ENCODE measurements at regions of chr1 and their contacts with region 1.

Region 1: DNA sequence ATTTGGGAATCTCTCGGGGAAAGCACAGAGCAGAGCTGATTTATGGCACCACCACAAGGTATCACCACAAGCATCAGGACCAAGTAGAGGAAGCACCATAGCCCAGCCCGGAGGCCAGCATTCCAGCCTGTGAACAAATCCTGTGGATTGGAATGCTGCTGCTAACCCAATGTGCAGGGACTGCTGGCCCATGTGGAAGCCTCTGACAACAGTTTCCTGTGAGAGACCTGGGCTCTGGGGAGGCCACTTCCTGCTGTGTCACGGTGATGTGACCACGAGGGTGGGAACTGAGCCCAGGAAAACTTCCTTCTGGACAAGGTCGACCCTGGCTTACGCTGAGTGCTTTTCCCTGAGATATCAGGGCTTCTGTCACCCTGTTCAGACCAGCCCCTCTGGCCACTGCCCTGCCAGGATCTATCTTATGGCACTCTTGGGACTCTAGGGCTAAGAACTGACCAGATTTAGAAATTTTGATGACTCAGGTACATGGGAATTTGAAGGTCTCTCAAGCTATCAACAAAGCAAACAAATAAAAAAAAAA is 88.3 kb upstream of the NGF start:
- DNase-seq: peak; percentile 84 to 97
- H3K4me3 ChIP-seq: no peak overlapping the region
- H3K27ac ChIP-seq: peak overlapping the region; percentile 90
- H3K4me1 ChIP-seq: peaks cover 64% of the 10 kb centered on the region
- H3K27me3 ChIP-seq: no peaks in the 10 kb centered on the region
- CTCF ChIP-seq: no peak

Region 2: GRCh38 chr1:115062542-115063011 is 363.7 kb before region 1 on chr1:
- CTCF ChIA-PET with region 1: no interaction called
- POLR2A ChIA-PET with region 1: no interaction called
- intact Hi-C with region 1: loop called (anchors 10 kb)
- DNase-seq: peak; percentile 98 to 99
- H3K4me3 ChIP-seq: peak overlapping the region; percentile 49
- H3K27ac ChIP-seq: peak overlapping the region; percentile 96
- H3K4me1 ChIP-seq: peaks cover 54% of the 10 kb centered on the region
- H3K27me3 ChIP-seq: no peaks in the 10 kb centered on the region
- CTCF ChIP-seq: 0 out of 2 replicates have a peak, but pooled peaks have one; percentile 26

Region 3: DNA sequence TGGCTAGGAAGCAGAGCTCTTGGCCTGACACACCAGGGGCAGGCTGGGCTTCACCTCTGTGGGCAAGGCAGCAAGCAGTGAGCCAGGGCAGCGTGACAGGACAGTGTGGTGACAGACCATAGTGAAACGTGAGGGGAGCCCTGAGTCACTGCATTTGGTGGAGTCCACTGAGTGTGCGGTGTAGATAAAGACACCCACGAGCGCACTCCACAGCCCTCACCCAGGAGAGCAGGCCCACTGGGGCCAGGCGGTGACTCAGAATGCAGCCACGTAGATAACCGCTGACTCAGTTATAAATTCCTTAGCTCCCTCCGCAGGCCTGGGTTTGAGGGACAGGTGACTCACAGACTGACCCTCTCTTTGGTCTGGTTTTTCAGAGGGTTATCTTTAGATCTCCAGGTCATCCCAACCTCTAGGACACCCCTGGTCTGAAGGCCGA is 246.9 kb before region 1 on chr1:
- CTCF ChIA-PET with region 1: interaction called, 3 read pairs
- POLR2A ChIA-PET with region 1: no interaction called
- intact Hi-C with region 1: loop called (anchors 5 kb)
- DNase-seq: peak; percentile 92 to 100
- H3K4me3 ChIP-seq: no peak overlapping the region
- H3K27ac ChIP-seq: peak overlapping the region; percentile 89
- H3K4me1 ChIP-seq: peaks cover 57% of the 10 kb centered on the region
- H3K27me3 ChIP-seq: no peaks in the 10 kb centered on the region
- CTCF ChIP-seq: no peak

Region 4: GRCh38 chr1:115337633-115338456 is 88.5 kb before region 1 on chr1 and contains the start of gene NGF:
- CTCF ChIA-PET with region 1: no interaction called
- POLR2A ChIA-PET with region 1: no interaction called
- intact Hi-C with region 1: loop called (anchors 5 kb)
- DNase-seq: peak; percentile 52 to 63
- H3K4me3 ChIP-seq: peak within 1 kb of the TSS; percentile 93
- H3K27ac ChIP-seq: peak within 1 kb of the TSS; percentile 38
- H3K4me1 ChIP-seq: peaks cover 38% of the 10 kb centered on the region
- H3K27me3 ChIP-seq: no peaks in the 10 kb centered on the region
- CTCF ChIP-seq: no peak
- total RNA-seq, gene NGF: 5.5 and 9.7 TPM in 2 replicates

Region 5: GRCh38 chr1:115402753-115403184 is 23.5 kb before region 1 on chr1:
- CTCF ChIA-PET with region 1: no interaction called
- POLR2A ChIA-PET with region 1: no interaction called
- intact Hi-C with region 1: no loop called
- DNase-seq: no peak
- H3K4me3 ChIP-seq: no peak overlapping the region
- H3K27ac ChIP-seq: no peak overlapping the region
- H3K4me1 ChIP-seq: no peaks in the 10 kb centered on the region
- H3K27me3 ChIP-seq: no peaks in the 10 kb centered on the region
- CTCF ChIP-seq: no peak

Region 6: DNA sequence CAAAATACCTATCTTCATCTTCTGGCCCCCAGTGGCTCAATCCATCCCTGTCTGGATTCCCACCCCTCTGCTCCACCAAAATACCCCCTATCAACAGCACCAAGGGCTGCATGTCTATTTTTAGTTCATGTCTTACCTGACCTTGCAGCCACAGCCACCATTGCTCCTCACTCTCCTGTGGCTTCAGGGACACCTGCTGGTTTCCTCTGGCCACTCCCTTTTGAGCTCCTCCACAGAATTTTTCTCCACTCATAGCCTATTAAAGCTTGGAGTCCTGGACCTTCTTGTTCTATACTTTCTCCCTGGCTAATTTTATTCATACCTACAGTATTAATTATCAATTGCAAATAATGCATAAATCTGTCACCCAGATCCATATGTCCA is 37.1 kb after region 1 on chr1:
- CTCF ChIA-PET with region 1: no interaction called
- POLR2A ChIA-PET with region 1: no interaction called
- intact Hi-C with region 1: loop called (anchors 1 kb)
- DNase-seq: peak in 1 of 2 experiments; percentile 56
- H3K4me3 ChIP-seq: no peak overlapping the region
- H3K27ac ChIP-seq: no peak overlapping the region
- H3K4me1 ChIP-seq: peaks cover 50% of the 10 kb centered on the region
- H3K27me3 ChIP-seq: no peaks in the 10 kb centered on the region
- CTCF ChIP-seq: peak; percentile 87

Region 7: GRCh38 chr1:115890580-115890979 is 464.3 kb after region 1 on chr1:
- CTCF ChIA-PET with region 1: no interaction called
- POLR2A ChIA-PET with region 1: interaction called, 20 read pairs
- intact Hi-C with region 1: no loop called
- DNase-seq: no peak
- H3K4me3 ChIP-seq: no peak overlapping the region
- H3K27ac ChIP-seq: no peak overlapping the region
- H3K4me1 ChIP-seq: no peaks in the 10 kb centered on the region
- H3K27me3 ChIP-seq: no peaks in the 10 kb centered on the region
- CTCF ChIP-seq: no peak